Mammary epithelial cell (primary cell): ENCODE measurements at regions of chr2 and their contacts with region 1.

Region 1: GRCh38 chr2:116160657-116161056 is 1653.8 kb upstream of the DDX18 start:
- DNase-seq: no peak
- H3K4me3 ChIP-seq: no peak overlapping the region
- H3K27ac ChIP-seq: no peak overlapping the region
- H3K4me1 ChIP-seq: no peaks in the 10 kb centered on the region
- H3K27me3 ChIP-seq: no peaks in the 10 kb centered on the region
- CTCF ChIP-seq: no peak

Region 2: GRCh38 chr2:116098049-116098448 is 62.6 kb before region 1 on chr2:
- CTCF ChIA-PET with region 1: no interaction called
- dilution Hi-C with region 1: loop called (anchors 5 kb)
- in situ Hi-C with region 1: no loop called
- intact Hi-C with region 1: no loop called
- DNase-seq: no peak
- H3K4me3 ChIP-seq: no peak overlapping the region
- H3K27ac ChIP-seq: no peak overlapping the region
- H3K4me1 ChIP-seq: no peaks in the 10 kb centered on the region
- H3K27me3 ChIP-seq: no peaks in the 10 kb centered on the region
- CTCF ChIP-seq: no peak